ENCODE measurements at regions of chr2 and their contacts with region 1.

Region 1: GRCh38 chr2:236526455-236527158 is 43.0 kb upstream of the ACKR3 start:
- DNase-seq: no peak
- H3K4me3 ChIP-seq: no peak overlapping the region
- CTCF ChIP-seq: no peak

Region 2: GRCh38 chr2:236195726-236196125 is 330.9 kb before region 1 on chr2:
- CTCF ChIA-PET with region 1: no interaction called
- POLR2A ChIA-PET with region 1: no interaction called
- DNase-seq: no peak
- H3K4me3 ChIP-seq: no peak overlapping the region
- CTCF ChIP-seq: no peak

Region 3: GRCh38 chr2:236512902-236513435 is 13.6 kb before region 1 on chr2:
- CTCF ChIA-PET with region 1: interaction called, 17 read pairs
- POLR2A ChIA-PET with region 1: no interaction called
- DNase-seq: no peak
- H3K4me3 ChIP-seq: no peak overlapping the region
- CTCF ChIP-seq: peak; percentile 80